Breast epithelium (tissue), 4 donors: ENCODE measurements at regions of chr2 and their contacts with region 1.

Region 1: GRCh38 chr2:25673300-25674076 is at the start of gene DTNB:
- DNase-seq: peak; percentile 81 to 96
- H3K4me3 ChIP-seq: peak within 1 kb of the TSS; percentile 79 to 93 (median 87)
- H3K27ac ChIP-seq: peak within 1 kb of the TSS; percentile 90 to 94
- H3K4me1 ChIP-seq: no peaks in the 10 kb centered on the region
- H3K27me3 ChIP-seq: no peaks in the 10 kb centered on the region
- CTCF ChIP-seq: no peak
- POLR2A ChIP-seq: no peak
- total RNA-seq, gene DTNB: 7.8 to 63.4 (median 44.9) TPM

Region 2: GRCh38 chr2:24238158-24238557 is 1435.3 kb before region 1 on chr2:
- intact Hi-C with region 1: no loop called
- DNase-seq: no peak
- H3K4me3 ChIP-seq: no peak overlapping the region
- H3K27ac ChIP-seq: no peak overlapping the region
- H3K4me1 ChIP-seq: no peaks in the 10 kb centered on the region
- H3K27me3 ChIP-seq: no peaks in the 10 kb centered on the region
- CTCF ChIP-seq: no peak
- POLR2A ChIP-seq: no peak

Region 3: GRCh38 chr2:25655316-25655715 is 18.2 kb before region 1 on chr2:
- intact Hi-C with region 1: loop called (anchors 1 kb)
- DNase-seq: no peak
- H3K4me3 ChIP-seq: no peak overlapping the region
- H3K27ac ChIP-seq: no peak overlapping the region
- H3K4me1 ChIP-seq: no peaks in the 10 kb centered on the region
- H3K27me3 ChIP-seq: no peaks in the 10 kb centered on the region
- CTCF ChIP-seq: no peak
- POLR2A ChIP-seq: no peak

Region 4: GRCh38 chr2:25690058-25690457 is 16.6 kb after region 1 on chr2:
- intact Hi-C with region 1: no loop called
- DNase-seq: peak in 1 of 2 donors; percentile 27
- H3K4me3 ChIP-seq: no peak overlapping the region
- H3K27ac ChIP-seq: no peak overlapping the region
- H3K4me1 ChIP-seq: no peaks in the 10 kb centered on the region
- H3K27me3 ChIP-seq: no peaks in the 10 kb centered on the region
- CTCF ChIP-seq: no peak
- POLR2A ChIP-seq: no peak

Region 5: DNA sequence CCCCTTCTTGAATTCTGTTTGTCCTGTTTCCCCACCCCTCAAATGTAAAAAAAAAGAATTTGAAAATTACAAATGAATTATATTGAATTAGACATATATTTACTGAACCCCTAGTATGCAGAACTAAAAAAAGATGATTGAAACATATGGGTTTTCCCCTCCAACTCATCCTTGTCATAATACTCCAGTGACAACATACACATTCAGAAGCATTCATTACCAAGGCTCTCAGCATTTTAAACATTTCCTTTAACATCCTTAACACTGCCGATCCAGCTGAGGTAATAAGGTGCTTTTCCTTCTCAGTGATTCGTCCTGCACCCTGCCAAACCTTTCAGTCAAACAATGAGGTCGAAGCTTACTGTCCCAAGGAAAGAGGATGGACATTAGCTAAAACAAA is 53.0 kb after region 1 on chr2:
- intact Hi-C with region 1: no loop called
- DNase-seq: no peak
- H3K4me3 ChIP-seq: no peak overlapping the region
- H3K27ac ChIP-seq: no peak overlapping the region
- H3K4me1 ChIP-seq: no peaks in the 10 kb centered on the region
- H3K27me3 ChIP-seq: no peaks in the 10 kb centered on the region
- CTCF ChIP-seq: no peak
- POLR2A ChIP-seq: no peak